Natural killer cell (primary cell): ENCODE measurements at regions of chr4 and their contacts with region 1.

Region 1: GRCh38 chr4:120156120-120156718 is 89.6 kb upstream of the MAD2L1 start:
- DNase-seq: peak in 1 of 2 donors; percentile 86
- ATAC-seq: peak in 1 of 3 donors; percentile 50
- H3K4me3 ChIP-seq: no peak overlapping the region
- H3K4me3 Mint-ChIP-seq: no peak overlapping the region
- H3K27ac ChIP-seq: no peak overlapping the region
- H3K27ac Mint-ChIP-seq: no peak overlapping the region
- H3K4me1 ChIP-seq: no peaks in the 10 kb centered on the region
- H3K4me1 Mint-ChIP-seq: no peaks in the 10 kb centered on the region
- H3K27me3 ChIP-seq: peaks cover under 1% of the 10 kb centered on the region
- H3K27me3 Mint-ChIP-seq: peaks cover 1 to 5% of the 10 kb centered on the region in 2 donors
- CTCF ChIP-seq: peak; percentile 73

Region 2: DNA sequence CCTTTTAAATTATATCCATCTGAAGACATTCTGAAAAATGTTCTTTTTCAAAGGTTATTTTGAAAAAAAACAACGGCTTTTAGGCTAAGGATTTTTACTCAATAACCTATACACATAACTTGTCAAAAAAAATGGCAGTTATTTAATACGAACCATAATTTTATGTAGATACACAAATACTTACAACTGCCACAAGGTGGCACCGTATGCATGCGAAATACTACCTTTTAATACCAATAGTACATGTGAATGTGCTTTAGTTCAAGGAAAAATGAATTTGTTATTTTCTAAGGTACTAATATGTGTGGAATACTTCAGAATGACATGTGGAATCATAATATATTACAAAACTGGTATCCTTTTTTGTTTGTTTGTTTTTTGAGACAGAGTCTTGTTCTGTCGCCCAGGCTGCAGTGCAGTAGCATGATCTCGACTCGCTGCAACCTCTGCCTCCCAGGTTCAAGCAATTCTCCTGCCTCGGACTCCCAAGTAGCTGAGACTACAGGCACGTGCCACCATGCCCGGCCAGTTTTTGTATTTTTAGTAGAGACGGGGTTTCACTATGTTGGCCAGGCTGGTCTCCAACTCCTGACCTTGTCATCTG is 84.9 kb before region 1 on chr4:
- intact Hi-C with region 1: loop called (anchors 2 kb)
- DNase-seq: peak; percentile 29 to 86
- ATAC-seq: no peak
- H3K4me3 ChIP-seq: no peak overlapping the region
- H3K4me3 Mint-ChIP-seq: no peak overlapping the region
- H3K27ac ChIP-seq: no peak overlapping the region
- H3K27ac Mint-ChIP-seq: no peak overlapping the region
- H3K4me1 ChIP-seq: peaks cover 8% of the 10 kb centered on the region
- H3K4me1 Mint-ChIP-seq: peaks cover 20% of the 10 kb centered on the region in 2 donors
- H3K27me3 ChIP-seq: no peaks in the 10 kb centered on the region
- H3K27me3 Mint-ChIP-seq: no peaks in the 10 kb centered on the region
- CTCF ChIP-seq: peak; percentile 73

Region 3: GRCh38 chr4:121096629-121097028 is 940.4 kb after region 1 on chr4:
- intact Hi-C with region 1: loop called (anchors 2 kb)
- DNase-seq: peak in 1 of 2 donors; percentile 47
- ATAC-seq: no peak
- H3K4me3 ChIP-seq: no peak overlapping the region
- H3K4me3 Mint-ChIP-seq: no peak overlapping the region
- H3K27ac ChIP-seq: no peak overlapping the region
- H3K27ac Mint-ChIP-seq: no peak overlapping the region
- H3K4me1 ChIP-seq: no peaks in the 10 kb centered on the region
- H3K4me1 Mint-ChIP-seq: no peaks in the 10 kb centered on the region
- H3K27me3 ChIP-seq: no peaks in the 10 kb centered on the region
- H3K27me3 Mint-ChIP-seq: peaks cover 0 to 2% of the 10 kb centered on the region in 2 donors
- CTCF ChIP-seq: peak; percentile 31

Region 4: GRCh38 chr4:121307445-121308327 is 1151.5 kb after region 1 on chr4:
- intact Hi-C with region 1: loop called (anchors 5 kb)
- DNase-seq: peak; percentile 24 to 82
- ATAC-seq: peak; percentile 63 to 74 (median 68)
- H3K4me3 ChIP-seq: no peak overlapping the region
- H3K4me3 Mint-ChIP-seq: no peak overlapping the region
- H3K27ac ChIP-seq: no peak overlapping the region
- H3K27ac Mint-ChIP-seq: no peak overlapping the region
- H3K4me1 ChIP-seq: no peaks in the 10 kb centered on the region
- H3K4me1 Mint-ChIP-seq: peaks cover 0 to 10% of the 10 kb centered on the region in 2 donors
- H3K27me3 ChIP-seq: no peaks in the 10 kb centered on the region
- H3K27me3 Mint-ChIP-seq: peaks cover under 1 to 15% of the 10 kb centered on the region in 2 donors
- CTCF ChIP-seq: peak; percentile 88